Left ventricle myocardium superior (tissue), 1 donor: ENCODE measurements at regions of chr21 and their contacts with region 1.

Region 1: DNA sequence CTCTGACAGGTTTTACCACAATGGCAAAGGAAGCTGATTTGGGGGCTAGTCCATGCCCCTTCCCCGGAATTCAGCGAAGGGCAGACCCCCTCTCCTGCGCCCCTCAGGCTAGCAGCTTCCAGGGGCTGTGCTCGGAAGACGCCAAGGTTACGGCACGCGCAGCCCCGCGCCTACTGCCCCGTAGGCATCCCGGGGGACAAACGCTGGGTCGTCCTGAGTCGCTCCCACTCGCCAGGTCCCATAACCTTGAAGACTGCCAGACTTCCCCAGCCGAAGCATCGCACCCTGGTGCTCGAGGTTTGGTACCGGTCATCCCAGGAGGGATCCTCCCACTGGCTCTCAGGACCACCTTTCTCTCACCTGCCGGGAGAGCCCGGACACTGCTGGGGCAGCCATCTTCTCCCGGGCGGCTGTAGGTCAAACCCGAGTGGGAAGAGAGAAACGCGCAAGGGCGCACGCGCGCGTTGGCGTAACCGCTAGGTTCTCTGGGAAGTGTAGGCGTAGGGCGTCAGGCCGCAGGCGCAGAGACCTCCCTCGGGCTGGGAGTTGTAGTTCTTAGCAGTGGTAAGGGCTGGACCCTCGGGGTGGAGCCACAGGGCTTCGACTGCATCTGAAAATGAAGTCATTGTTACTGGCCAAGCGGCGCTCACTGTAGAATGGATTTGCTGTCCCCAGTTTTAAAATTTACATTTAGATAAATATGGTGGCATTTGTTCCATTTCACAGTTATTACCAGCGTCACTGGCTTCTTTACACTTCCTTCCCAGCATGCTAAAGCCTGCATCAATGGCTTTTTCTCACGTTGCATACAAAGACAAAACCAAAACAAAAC is at the start of gene ATP5PO:
- DNase-seq: peak; percentile 99
- ATAC-seq: peak; percentile 99
- total RNA-seq, gene ATP5PO: 850 TPM

Region 2: DNA sequence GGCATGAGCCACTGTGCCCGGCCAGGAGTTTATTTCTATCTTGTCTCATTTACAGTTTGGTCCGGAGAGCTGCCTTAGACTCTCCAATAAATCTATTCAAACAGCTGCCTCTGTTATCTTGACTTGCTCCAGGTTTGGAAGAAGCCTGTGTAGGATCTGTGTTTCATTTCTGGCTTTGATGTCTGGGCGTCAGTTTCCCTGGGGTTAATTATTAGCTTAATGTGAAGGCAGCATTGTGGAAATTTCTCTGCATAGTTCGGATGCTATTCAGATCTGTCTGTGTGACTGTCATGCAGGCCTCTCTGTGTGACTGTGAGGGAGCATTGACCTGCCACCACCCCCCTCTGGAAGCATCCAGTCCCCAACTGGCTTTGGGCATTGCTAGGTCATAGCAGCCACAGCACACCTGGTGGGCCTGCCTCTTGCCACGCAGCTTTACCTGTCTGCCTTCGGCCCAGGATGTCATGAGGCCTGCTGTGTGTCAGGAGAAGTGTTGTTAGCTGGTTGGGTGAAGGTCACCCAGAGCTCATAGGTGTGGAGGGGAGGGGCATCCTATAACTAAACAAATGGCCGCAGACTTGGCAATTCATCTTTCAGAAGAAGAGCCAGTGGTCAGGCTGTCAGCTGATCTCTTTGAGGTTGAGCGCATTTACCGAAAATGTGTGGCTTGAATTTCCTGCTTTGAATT is 502.6 kb before region 1 on chr21:
- intact Hi-C with region 1: no loop called
- DNase-seq: no peak
- ATAC-seq: no peak

Region 3: DNA sequence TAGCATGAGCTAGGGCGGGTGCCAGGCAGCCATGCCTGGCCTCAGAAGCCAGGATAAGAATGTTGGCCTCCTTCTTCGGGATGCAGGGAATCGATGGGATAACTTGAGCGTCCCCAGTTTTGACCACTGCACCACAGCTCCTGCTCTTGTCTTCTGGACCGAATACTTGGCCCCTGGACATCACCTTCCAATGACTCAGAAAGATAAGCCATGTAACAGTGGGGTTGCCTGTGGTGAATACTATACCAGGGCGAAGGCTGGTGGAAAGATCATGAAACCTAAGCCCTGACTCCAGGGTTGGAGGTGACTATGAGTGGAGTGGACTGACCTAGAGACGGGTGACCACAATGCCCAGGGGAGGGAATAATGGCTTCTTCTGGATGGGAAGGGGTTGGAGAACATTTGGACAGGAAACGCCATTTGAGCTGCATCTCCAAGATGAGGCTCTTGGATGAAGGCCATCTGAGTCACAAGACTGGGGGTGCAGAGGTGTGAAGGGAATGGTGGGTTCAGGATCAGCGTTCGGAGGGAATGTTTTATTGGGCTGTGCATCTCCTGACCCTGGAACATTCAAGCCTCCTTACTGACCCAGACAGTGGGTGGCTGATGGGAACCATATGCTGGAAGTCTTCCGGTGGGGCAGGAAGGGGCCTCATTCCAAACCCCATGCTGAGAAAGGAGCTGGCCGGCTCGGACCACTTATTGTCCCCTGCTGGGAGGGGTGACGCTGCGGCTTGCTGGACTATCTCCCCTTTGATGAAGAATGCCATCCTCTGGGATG is 429.7 kb after region 1 on chr21:
- intact Hi-C with region 1: loop called (anchors 5 kb)
- DNase-seq: peak; percentile 39
- ATAC-seq: peak; percentile 57